Dorsolateral prefrontal cortex (tissue), 120 donors: ENCODE measurements at regions of chr20 and their contacts with region 1.

Region 1: GRCh38 chr20:63955827-63956663 is at the start of gene UCKL1:
- DNase-seq: peak; percentile 81 to 92 (median 90)
- H3K4me3 ChIP-seq: peak within 1 kb of the TSS; percentile 71 to 100 (median 98)
- H3K27ac ChIP-seq: peak within 1 kb of the TSS; percentile 49 to 99 (median 91)
- H3K27me3 ChIP-seq: no peaks in the 10 kb centered on the region
- CTCF ChIP-seq: peak in 31 of 56 donors; percentile 3 to 38 (median 21)
- total RNA-seq, gene UCKL1: 22.1 to 74.1 (median 40.8) TPM

Region 2: GRCh38 chr20:63657937-63658748 is 297.9 kb before region 1 on chr20 and contains the start of gene RTEL1:
- intact Hi-C with region 1: loop called (anchors 1 kb)
- DNase-seq: peak; percentile 83 to 96 (median 91)
- H3K4me3 ChIP-seq: peak within 1 kb of the TSS; percentile 61 to 98 (median 84)
- H3K27ac ChIP-seq: peak within 1 kb of the TSS; percentile 60 to 98 (median 92)
- H3K27me3 ChIP-seq: no peaks in the 10 kb centered on the region
- CTCF ChIP-seq: peak in 31 of 56 donors; percentile 6 to 51 (median 33)
- total RNA-seq, gene RTEL1: 24.4 to 94.5 (median 44.5) TPM

Region 3: DNA sequence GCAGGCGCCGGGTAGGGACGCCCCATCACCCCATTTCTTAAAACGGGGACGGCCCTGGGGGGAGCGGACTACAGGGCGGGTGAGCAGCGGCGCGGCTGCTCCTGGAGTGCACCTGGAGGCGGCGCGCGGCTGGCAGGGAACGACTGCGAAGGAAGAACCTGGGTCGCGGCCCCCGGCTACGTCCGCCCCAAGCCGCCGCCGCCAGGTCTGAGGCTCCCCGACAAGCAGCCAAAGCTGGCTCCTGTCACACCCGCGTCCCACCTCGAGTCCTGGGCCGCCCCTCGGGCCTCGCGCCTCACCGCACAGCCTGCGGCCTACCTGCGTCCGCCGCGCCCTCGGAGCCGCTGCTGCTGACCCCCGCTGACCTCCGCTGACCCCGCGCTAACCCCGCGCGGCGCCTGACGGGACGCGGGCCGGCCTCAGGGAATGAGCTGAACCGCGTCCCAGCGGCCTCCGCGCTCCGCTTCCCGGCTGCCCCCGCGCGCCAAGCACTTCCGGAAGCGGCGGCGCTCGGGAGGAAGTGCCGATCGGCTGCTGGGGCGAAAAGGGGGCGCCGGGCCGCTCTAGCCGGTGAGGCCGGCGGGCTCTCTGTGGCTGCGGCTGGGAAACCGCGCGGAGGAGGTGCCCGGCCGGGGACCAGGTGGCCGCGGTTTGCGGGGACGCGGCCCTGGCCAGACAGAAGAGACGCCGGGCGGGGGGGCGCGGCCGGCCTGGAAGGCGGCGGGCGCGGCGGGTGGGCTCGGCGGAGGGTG is 248.3 kb before region 1 on chr20 and contains the starts of genes ARFRP1 and ZGPAT:
- intact Hi-C with region 1: loop called in 1 of 2 experiments (anchors 5 kb)
- DNase-seq: peak; percentile 88 to 97 (median 90)
- H3K4me3 ChIP-seq: peak within 1 kb of the TSS; percentile 72 to 100 (median 94)
- H3K27ac ChIP-seq: peak within 1 kb of the TSS in 55 of 59 donors; percentile 30 to 94 (median 83)
- H3K27me3 ChIP-seq: no peaks in the 10 kb centered on the region
- CTCF ChIP-seq: peak in 31 of 56 donors; percentile 5 to 59 (median 26)
- total RNA-seq, gene ARFRP1: 37.8 to 65.5 (median 48.4) TPM
- total RNA-seq, gene ZGPAT: 18.4 to 46.9 (median 28.4) TPM

Region 4: GRCh38 chr20:63894358-63895201 is 61.5 kb before region 1 on chr20 and contains the start of gene DNAJC5:
- intact Hi-C with region 1: loop called in 1 of 2 experiments (anchors 5 kb)
- DNase-seq: peak; percentile 89 to 98 (median 94)
- H3K4me3 ChIP-seq: peak within 1 kb of the TSS; percentile 42 to 89 (median 76)
- H3K27ac ChIP-seq: peak within 1 kb of the TSS in 55 of 59 donors; percentile 13 to 90 (median 73)
- H3K27me3 ChIP-seq: no peaks in the 10 kb centered on the region
- CTCF ChIP-seq: peak in 24 of 56 donors; percentile 8 to 53 (median 28)
- total RNA-seq, gene DNAJC5: 69.5 to 175 (median 137) TPM

Region 5: GRCh38 chr20:63911176-63911575 is 44.9 kb before region 1 on chr20:
- intact Hi-C with region 1: loop called in 1 of 2 experiments (anchors 2 kb)
- DNase-seq: peak in 7 of 10 donors; percentile 24 to 66 (median 49)
- H3K4me3 ChIP-seq: peak overlapping the region in 4 of 59 donors; percentile 5 to 32 (median 17)
- H3K27ac ChIP-seq: peak overlapping the region in 46 of 59 donors; percentile 2 to 80 (median 52)
- H3K27me3 ChIP-seq: no peaks in the 10 kb centered on the region
- CTCF ChIP-seq: peak in 1 of 56 donors; percentile 7

Region 6: DNA sequence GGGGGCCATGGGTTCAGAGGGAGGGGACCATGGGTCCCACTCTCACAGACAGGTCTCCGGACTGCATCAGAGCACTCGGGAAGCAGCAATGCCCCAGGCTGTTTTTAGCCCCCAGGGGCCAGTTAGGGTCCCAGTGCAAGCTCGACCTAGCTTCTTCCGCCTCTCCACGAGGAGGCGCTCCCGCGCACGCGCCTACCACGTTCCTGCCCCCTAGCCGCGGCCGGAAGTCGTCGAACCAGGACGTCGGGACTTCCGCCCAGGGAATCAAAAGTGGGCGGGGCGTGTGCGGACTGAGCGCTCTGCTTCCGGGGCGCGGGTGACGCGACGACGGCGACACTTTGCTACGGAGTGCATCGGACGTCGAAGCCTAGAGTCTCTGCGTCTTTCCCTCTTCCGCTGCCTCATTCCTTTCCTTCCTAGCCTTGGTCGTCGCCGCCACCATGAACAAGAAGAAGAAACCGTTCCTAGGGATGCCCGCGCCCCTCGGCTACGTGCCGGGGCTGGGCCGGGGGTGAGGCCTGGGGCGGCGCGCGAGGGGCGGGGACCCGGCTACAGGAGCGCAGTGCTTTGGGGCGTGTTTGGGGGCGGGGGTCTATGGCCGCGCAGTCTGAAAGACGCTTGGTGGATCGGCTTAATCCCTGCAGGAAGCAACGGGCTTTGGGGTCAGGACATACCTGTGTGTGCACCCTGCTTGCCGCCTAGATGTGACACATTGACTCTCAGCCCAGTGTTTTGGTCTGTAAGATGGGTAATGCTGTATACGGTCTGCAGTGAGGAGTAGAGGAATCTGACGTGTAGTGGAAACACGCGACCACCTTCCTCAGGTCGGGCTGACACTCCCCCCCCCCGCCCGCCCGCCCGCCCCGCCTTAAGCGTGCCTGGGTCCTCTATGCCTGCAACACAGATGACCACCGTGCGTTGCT is 25.0 kb after region 1 on chr20 and contains the start of gene PRPF6:
- intact Hi-C with region 1: loop called in 1 of 2 experiments (anchors 1 kb)
- DNase-seq: peak; percentile 92 to 96 (median 94)
- H3K4me3 ChIP-seq: peak within 1 kb of the TSS; percentile 73 to 100 (median 98)
- H3K27ac ChIP-seq: peak within 1 kb of the TSS in 55 of 59 donors; percentile 10 to 88 (median 73)
- H3K27me3 ChIP-seq: peaks cover 0 to 17% (median 0%) of the 10 kb centered on the region in 45 donors
- CTCF ChIP-seq: peak; percentile 73 to 99 (median 96)
- total RNA-seq, gene PRPF6: 41.9 to 83.8 (median 68.3) TPM